PC-9 (cell line): ENCODE measurements at regions of chr1 and their contacts with region 1.

Region 1: DNA sequence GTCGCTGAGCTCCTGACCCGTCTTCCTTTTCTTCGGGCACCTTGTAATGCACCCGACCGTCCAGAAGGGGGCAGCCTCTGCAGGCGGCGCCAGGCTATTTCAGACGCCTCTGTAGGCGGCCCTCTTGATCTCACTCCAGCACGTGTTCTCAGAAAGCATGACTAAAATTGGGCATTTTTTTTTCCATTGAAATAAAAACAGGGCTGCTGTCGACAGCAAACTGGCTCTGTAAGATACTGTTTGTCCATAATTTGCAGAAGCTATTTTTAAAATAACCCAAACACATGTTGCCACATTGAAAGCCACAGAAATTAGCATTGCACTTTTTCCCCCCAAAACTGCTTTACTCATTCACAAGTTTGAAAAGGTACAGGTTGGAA is 78.0 kb downstream of the STUM start:
- DNase-seq: peak; percentile 39 to 73
- H3K4me3 ChIP-seq: no peak overlapping the region
- H3K27ac ChIP-seq: no peak overlapping the region
- H3K4me1 ChIP-seq: peaks cover 10% of the 10 kb centered on the region; the same call in 1 of the 2 replicates
- H3K27me3 ChIP-seq: no peaks in the 10 kb centered on the region
- CTCF ChIP-seq: peak; percentile 97

Region 2: DNA sequence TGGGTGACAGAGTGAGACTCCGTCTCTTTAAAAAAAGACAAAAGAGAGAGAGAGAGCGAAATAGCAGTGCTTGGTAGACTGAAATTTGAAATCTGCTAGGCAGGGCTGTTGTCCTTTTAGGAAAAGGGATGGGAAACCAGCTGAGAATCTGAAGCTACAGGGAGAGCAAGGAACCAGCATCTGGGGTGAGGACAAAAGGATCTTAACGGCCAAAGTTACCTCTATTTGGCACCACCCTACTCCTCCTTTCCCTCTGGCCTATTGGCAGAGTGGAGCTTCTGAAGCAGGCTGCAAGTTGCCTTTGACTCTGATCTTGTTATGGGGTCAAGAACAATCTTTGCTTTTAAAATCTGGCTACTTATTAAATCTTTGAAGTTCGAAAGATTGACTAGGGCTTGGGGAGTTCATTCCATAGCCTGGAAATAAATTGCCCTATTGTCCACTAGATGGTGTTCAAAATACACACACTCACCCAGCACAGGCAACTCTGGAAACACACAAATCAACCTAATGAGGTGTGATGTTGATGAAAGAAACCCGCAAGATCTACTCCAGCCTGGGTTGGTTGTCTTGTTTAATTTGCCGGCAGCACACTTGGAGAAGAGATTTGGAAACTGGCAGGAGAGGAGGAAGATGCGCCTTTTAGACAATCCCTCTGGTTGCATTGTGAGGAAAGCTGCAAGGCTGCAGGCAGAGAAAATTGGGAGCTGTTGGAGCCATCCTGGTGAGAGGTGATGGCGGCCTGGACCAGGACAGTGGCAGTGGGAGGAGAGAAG is 202.2 kb before region 1 on chr1:
- CTCF ChIA-PET with region 1: no interaction called
- POLR2A ChIA-PET with region 1: no interaction called
- intact Hi-C with region 1: loop called (anchors 10 kb)
- DNase-seq: peak in 1 of 2 experiments; percentile 47
- H3K4me3 ChIP-seq: no peak overlapping the region
- H3K27ac ChIP-seq: no peak overlapping the region
- H3K4me1 ChIP-seq: no peaks in the 10 kb centered on the region
- H3K27me3 ChIP-seq: no peaks in the 10 kb centered on the region; the same call in 1 of the 2 replicates
- CTCF ChIP-seq: peak; percentile 77

Region 3: DNA sequence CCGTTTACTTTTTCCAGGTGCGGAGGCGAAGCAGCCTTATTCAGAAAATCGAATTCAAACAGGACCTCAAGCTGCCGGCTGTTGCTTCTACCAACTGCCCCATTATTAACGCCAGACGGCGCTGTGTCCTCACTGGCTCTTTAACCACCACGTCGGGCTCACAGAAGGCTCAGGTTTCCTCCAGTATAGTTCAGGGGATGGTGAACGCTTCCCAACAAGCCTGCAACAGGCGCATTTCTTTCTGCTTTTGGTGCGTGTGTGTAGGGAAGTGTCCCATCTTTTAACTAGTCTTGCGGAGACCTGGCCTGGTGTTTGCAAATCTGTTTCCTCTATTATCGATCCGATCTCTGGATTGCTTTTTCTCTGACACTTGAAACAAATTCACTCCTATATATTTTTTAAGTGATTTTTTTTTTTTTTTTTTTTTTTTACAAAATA is 78.8 kb before region 1 on chr1:
- CTCF ChIA-PET with region 1: no interaction called
- POLR2A ChIA-PET with region 1: no interaction called
- intact Hi-C with region 1: loop called (anchors 5 kb)
- DNase-seq: peak; percentile 67 to 82
- H3K4me3 ChIP-seq: no peak overlapping the region
- H3K27ac ChIP-seq: no peak overlapping the region
- H3K4me1 ChIP-seq: no peaks in the 10 kb centered on the region
- H3K27me3 ChIP-seq: peaks cover 8% of the 10 kb centered on the region; the same call in 1 of the 2 replicates
- CTCF ChIP-seq: peak; percentile 85

Region 4: DNA sequence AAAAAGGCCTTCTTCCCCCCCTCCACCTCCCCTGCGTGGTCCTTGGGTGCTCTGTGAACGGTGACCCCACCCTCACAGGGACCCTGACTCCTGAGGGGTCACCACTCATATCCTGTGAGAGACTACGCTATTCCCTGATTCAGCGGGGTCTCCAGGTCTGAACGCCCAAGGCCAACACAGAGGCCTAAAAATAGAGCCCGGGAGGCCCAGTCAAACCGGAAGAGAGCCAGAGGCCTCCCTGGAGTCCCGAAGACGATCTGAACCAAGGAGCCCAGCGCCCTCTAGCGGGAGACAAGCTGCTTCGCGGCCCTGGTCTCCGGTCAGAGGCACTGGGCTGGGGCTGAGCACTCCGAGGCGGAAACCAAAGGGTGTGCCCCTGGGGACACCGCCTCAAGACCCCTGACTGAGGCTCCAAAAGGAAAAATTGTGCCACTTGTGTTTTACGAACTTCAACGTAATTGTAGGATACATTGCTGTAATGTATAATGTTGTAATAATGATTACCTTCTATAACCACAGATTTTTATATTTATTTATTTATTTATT is 201.5 kb after region 1 on chr1:
- CTCF ChIA-PET with region 1: interaction called, 8 read pairs
- POLR2A ChIA-PET with region 1: no interaction called
- intact Hi-C with region 1: loop called (anchors 2 kb)
- DNase-seq: peak; percentile 73 to 91
- H3K4me3 ChIP-seq: no peak overlapping the region
- H3K27ac ChIP-seq: no peak overlapping the region
- H3K4me1 ChIP-seq: peaks cover 21% of the 10 kb centered on the region
- H3K27me3 ChIP-seq: no peaks in the 10 kb centered on the region
- CTCF ChIP-seq: peak; percentile 92

Region 5: DNA sequence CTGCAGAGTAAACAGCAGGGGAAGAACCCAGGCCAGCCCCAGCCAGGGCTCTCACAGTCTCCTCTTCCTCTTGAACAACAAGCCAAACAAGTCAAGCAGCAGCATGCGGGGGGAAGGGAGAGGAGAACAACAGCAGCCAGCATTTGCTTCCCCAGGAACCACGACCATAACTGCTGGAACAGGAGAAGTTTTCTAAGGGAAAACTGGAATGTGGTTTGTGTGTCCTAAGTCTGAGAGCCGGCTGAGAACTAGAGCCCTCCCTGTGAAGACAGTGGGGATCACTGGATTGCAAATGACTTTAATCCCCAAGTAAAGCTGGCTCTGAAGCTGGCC is 361.7 kb after region 1 on chr1:
- CTCF ChIA-PET with region 1: no interaction called
- POLR2A ChIA-PET with region 1: no interaction called
- intact Hi-C with region 1: loop called (anchors 10 kb)
- DNase-seq: peak in 1 of 2 experiments; percentile 48
- H3K4me3 ChIP-seq: no peak overlapping the region
- H3K27ac ChIP-seq: no peak overlapping the region
- H3K4me1 ChIP-seq: peaks cover 10% of the 10 kb centered on the region; the same call in 1 of the 2 replicates
- H3K27me3 ChIP-seq: no peaks in the 10 kb centered on the region
- CTCF ChIP-seq: no peak

Region 6: GRCh38 chr1:227396539-227397353 is 770.2 kb after region 1 on chr1:
- CTCF ChIA-PET with region 1: interaction called, 11 read pairs
- POLR2A ChIA-PET with region 1: no interaction called
- intact Hi-C with region 1: no loop called
- DNase-seq: no peak
- H3K4me3 ChIP-seq: no peak overlapping the region
- H3K27ac ChIP-seq: no peak overlapping the region
- H3K4me1 ChIP-seq: no peaks in the 10 kb centered on the region
- H3K27me3 ChIP-seq: no peaks in the 10 kb centered on the region
- CTCF ChIP-seq: no peak

Region 7: GRCh38 chr1:227437495-227438008 is 811.0 kb after region 1 on chr1:
- CTCF ChIA-PET with region 1: no interaction called
- POLR2A ChIA-PET with region 1: no interaction called
- intact Hi-C with region 1: loop called (anchors 2 kb)
- DNase-seq: peak in 1 of 2 experiments; percentile 54
- H3K4me3 ChIP-seq: peak overlapping the region; percentile 49; the same call in 1 of the 2 replicates
- H3K27ac ChIP-seq: no peak overlapping the region
- H3K4me1 ChIP-seq: no peaks in the 10 kb centered on the region
- H3K27me3 ChIP-seq: no peaks in the 10 kb centered on the region
- CTCF ChIP-seq: peak; percentile 69